Activated CD4-positive, alpha-beta T cell treated with anti-CD3 and anti-CD28 coated beads for 36 hours (primary cell): ENCODE measurements at regions of chr12 and their contacts with region 1.

Region 1: GRCh38 chr12:13255792-13256691 is 59.5 kb downstream of the EMP1 start:
- DNase-seq: peak; percentile 92
- ATAC-seq: peak; percentile 100
- H3K4me3 Mint-ChIP-seq: no peak overlapping the region
- H3K27ac Mint-ChIP-seq: no peak overlapping the region
- H3K4me1 Mint-ChIP-seq: peaks cover 3% of the 10 kb centered on the region
- H3K27me3 Mint-ChIP-seq: peaks cover 2% of the 10 kb centered on the region

Region 2: GRCh38 chr12:13044002-13044905 is 211.8 kb before region 1 on chr12 and contains the start of gene FAM234B:
- CTCF ChIA-PET with region 1: interaction called, 13 read pairs
- POLR2A ChIA-PET with region 1: no interaction called
- intact Hi-C with region 1: no loop called
- DNase-seq: peak; percentile 85
- ATAC-seq: peak; percentile 88
- H3K4me3 Mint-ChIP-seq: peak within 1 kb of the TSS; percentile 83
- H3K27ac Mint-ChIP-seq: peak within 1 kb of the TSS; percentile 77
- H3K4me1 Mint-ChIP-seq: peaks cover 27% of the 10 kb centered on the region
- H3K27me3 Mint-ChIP-seq: peaks cover 5% of the 10 kb centered on the region
- total RNA-seq, gene FAM234B: 11.1 to 12.2 TPM

Region 3: DNA sequence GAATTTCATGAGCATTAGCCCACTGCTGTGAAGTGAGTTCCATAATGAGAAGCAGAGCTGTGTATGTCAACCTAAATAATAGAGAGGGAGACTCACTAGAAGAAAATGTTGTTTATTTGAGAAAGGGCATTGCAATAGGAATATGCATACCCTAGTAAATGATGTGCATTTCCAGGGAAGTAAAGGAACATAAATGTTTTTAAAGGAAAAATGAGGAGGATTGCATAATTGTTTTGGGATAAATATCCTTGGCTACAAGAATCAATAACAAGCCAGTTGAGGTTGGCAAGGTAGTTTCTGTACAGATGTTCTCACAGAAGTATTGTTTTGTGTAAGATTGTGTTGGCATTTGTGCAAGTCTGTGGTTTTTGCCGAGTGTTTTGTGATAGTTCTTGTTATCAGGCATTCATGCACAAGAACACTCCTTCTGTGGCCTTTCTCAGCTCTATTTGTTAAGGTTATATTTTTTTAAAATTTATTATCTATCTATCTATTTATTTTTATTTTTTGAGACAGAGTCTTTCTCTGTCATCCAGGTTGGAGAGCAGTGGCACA is 12.4 kb before region 1 on chr12:
- CTCF ChIA-PET with region 1: interaction called, 16 read pairs
- POLR2A ChIA-PET with region 1: no interaction called
- intact Hi-C with region 1: no loop called
- DNase-seq: no peak
- ATAC-seq: no peak
- H3K4me3 Mint-ChIP-seq: no peak overlapping the region
- H3K27ac Mint-ChIP-seq: no peak overlapping the region
- H3K4me1 Mint-ChIP-seq: no peaks in the 10 kb centered on the region
- H3K27me3 Mint-ChIP-seq: peaks cover 9% of the 10 kb centered on the region

Region 4: GRCh38 chr12:13278249-13278787 is 22.3 kb after region 1 on chr12:
- CTCF ChIA-PET with region 1: interaction called, 41 read pairs
- POLR2A ChIA-PET with region 1: no interaction called
- intact Hi-C with region 1: no loop called
- DNase-seq: peak; percentile 82
- ATAC-seq: peak; percentile 97
- H3K4me3 Mint-ChIP-seq: no peak overlapping the region
- H3K27ac Mint-ChIP-seq: no peak overlapping the region
- H3K4me1 Mint-ChIP-seq: peaks cover 3% of the 10 kb centered on the region
- H3K27me3 Mint-ChIP-seq: peaks cover 32% of the 10 kb centered on the region

Region 5: DNA sequence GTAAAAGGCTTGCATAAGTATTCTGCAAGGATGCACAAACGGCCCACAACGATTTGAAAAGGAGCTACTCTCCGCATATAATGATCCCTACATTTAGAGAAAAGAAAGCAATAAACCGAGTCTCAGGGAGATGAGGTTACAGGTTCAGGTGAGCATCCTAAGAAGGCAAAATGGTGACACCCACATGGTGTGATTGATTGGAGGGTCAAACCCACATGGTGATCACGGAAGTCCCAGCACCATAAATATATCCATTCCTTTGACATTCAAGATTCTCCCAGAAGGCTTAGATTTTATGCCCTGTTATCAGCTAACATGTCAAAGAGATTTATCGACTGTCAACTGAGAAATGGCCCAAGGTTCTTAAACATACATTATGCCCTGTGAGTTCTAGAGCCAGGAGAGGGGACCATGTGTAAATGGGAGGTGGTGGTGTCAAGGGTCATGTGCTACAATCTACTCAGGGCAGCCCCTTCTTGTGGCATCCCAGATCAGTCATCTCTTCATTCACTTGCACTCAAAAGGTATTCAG is 222.7 kb after region 1 on chr12:
- CTCF ChIA-PET with region 1: no interaction called
- POLR2A ChIA-PET with region 1: no interaction called
- intact Hi-C with region 1: no loop called
- DNase-seq: no peak
- ATAC-seq: no peak
- H3K4me3 Mint-ChIP-seq: no peak overlapping the region
- H3K27ac Mint-ChIP-seq: no peak overlapping the region
- H3K4me1 Mint-ChIP-seq: no peaks in the 10 kb centered on the region
- H3K27me3 Mint-ChIP-seq: peaks cover 8% of the 10 kb centered on the region

Region 6: GRCh38 chr12:13661005-13661887 is 405.2 kb after region 1 on chr12:
- CTCF ChIA-PET with region 1: interaction called, 7 read pairs
- POLR2A ChIA-PET with region 1: no interaction called
- intact Hi-C with region 1: loop called (anchors 1 to 2 kb)
- DNase-seq: peak; percentile 46
- ATAC-seq: peak; percentile 68
- H3K4me3 Mint-ChIP-seq: no peak overlapping the region
- H3K27ac Mint-ChIP-seq: no peak overlapping the region
- H3K4me1 Mint-ChIP-seq: peaks cover 3% of the 10 kb centered on the region
- H3K27me3 Mint-ChIP-seq: peaks cover 11% of the 10 kb centered on the region